Colonic mucosa (tissue), 4 donors: ENCODE measurements at regions of chr1 and their contacts with region 1.

Region 1: DNA sequence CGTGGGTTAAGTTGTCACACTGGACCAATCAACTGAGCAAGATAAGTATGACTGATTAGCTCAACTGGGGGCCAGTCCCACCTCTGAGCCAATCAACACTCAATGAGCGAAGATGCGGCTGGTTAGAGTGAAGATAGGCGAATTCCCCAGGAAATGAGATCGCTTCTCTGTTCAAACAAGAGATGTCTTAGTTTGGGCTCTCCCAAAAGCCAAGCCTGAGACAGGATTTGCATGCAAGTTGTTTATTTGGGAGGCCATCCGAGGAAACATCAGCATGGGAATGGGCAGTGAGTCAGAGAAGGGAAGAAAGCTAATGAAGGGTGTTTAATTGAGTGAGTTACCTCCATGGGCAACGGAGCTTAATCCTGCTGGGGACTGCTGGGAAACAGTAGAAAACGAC is 4.9 kb upstream of the GJB5 start:
- DNase-seq: no peak
- H3K4me3 ChIP-seq: no peak overlapping the region
- H3K27ac ChIP-seq: no peak overlapping the region
- H3K4me1 ChIP-seq: no peaks in the 10 kb centered on the region
- H3K27me3 ChIP-seq: no peaks in the 10 kb centered on the region
- CTCF ChIP-seq: no peak

Region 2: DNA sequence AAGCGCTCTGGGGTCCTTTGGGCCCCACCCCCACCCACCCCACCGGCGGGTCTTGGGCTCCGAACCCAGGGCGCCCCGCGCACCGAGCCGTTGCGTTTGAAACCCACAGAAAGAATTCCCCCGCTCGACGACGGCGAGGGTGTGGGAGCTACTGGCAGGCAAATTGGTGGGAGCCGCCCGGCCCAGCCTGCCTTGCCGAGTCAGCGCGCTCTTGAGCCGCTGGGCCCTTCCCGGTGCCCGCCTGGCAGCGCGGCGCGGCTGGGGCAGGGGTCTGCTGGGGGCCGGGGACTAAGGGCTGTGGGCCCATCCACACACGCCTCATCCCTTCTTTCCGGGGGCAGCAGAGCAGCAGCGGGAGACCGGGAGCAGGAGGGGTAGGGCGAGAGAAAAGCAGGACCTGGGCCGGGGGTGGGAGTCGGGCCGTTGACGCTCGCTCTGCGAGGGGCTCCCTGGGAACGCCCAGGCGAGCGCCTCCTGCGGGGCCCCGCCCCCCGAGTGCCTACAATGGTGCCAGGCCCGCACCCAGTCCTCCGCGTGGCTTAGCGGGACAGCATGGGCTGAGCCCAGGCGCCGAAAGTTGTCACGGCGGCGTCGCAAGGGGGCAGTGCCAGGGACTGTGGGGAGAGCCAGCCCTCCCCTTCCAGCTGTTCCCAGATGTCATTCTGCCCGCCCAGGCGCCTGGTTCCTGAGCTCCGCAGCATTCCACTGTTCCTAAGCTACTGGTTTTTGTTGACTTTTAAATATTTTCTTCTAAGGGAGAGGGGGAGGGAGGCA is 573.0 kb before region 1 on chr1 and contains the start of gene C1orf94:
- intact Hi-C with region 1: no loop called
- DNase-seq: no peak
- H3K4me3 ChIP-seq: no peak within 1 kb of the TSS
- H3K27ac ChIP-seq: no peak within 1 kb of the TSS
- H3K4me1 ChIP-seq: no peaks in the 10 kb centered on the region
- H3K27me3 ChIP-seq: peaks cover 6% of the 10 kb centered on the region
- CTCF ChIP-seq: no peak
- total RNA-seq, gene C1orf94: not detected

Region 3: DNA sequence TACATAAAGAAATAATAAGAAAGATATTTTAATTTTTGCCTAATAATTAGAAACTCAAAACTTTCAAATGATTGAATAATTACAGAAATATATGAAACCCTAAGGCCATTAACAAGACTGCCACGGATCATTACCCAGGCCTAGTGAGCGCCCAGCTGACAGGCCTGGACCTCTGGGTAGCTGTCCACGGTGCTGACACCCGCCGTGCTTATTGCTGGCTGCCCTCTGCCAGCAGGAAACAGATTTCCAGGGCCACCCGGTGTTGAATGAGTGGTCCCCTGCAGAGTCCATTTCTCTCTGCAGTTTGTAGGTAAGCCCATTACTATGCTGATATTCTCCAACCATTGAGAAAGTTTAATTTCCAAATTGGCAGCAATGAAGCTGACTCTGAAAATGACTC is 249.5 kb before region 1 on chr1:
- intact Hi-C with region 1: no loop called
- DNase-seq: no peak
- H3K4me3 ChIP-seq: no peak overlapping the region
- H3K27ac ChIP-seq: no peak overlapping the region
- H3K4me1 ChIP-seq: no peaks in the 10 kb centered on the region
- H3K27me3 ChIP-seq: no peaks in the 10 kb centered on the region
- CTCF ChIP-seq: no peak

Region 4: GRCh38 chr1:34603594-34603993 is 146.4 kb before region 1 on chr1:
- intact Hi-C with region 1: loop called (anchors 5 kb)
- DNase-seq: no peak
- H3K4me3 ChIP-seq: no peak overlapping the region
- H3K27ac ChIP-seq: no peak overlapping the region
- H3K4me1 ChIP-seq: no peaks in the 10 kb centered on the region
- H3K27me3 ChIP-seq: no peaks in the 10 kb centered on the region
- CTCF ChIP-seq: no peak

Region 5: DNA sequence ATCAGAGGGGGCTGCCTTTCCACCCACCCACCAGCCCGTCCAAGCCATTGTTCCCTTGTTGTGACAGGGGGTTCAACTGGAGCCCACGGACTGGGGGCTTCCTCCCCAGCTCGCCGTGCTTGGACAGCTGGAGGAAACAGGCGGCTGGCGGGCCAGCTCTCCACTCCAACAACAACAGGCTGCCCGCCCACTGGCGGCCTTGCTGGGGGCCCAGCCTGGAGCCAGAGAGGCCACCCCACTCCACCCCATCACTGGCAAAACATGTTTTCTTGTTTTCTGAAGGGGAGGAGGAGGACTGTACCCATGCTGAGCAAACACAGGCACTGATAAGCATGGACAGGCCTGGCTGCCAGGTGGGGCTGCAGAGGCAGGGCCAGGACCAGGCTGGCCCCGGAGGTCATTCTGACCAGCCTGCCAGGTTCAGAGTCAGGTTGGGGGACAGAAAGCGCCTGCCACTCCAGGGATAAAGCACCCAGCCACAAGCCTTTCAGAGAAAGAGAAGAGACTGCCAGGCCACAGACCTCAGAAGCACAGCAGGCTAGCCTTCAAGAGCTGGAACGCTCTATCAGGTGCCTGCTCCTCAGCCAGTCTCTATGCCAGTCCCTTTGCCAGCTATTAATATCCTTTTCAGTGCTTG is 75.6 kb after region 1 on chr1:
- intact Hi-C with region 1: no loop called
- DNase-seq: peak; percentile 32
- H3K4me3 ChIP-seq: no peak overlapping the region
- H3K27ac ChIP-seq: no peak overlapping the region
- H3K4me1 ChIP-seq: no peaks in the 10 kb centered on the region
- H3K27me3 ChIP-seq: no peaks in the 10 kb centered on the region
- CTCF ChIP-seq: no peak